GM12878 (cell line): ENCODE measurements at regions of chr3 and their contacts with region 1.

Region 1: GRCh38 chr3:129249276-129250065 is at the start of gene COPG1:
- DNase-seq: peak; percentile 72
- ATAC-seq: peak; percentile 92
- H3K4me3 ChIP-seq: peak within 1 kb of the TSS; percentile 84
- H3K27ac ChIP-seq: peak within 1 kb of the TSS; percentile 94
- H3K4me1 ChIP-seq: peaks cover 8% of the 10 kb centered on the region
- H3K27me3 ChIP-seq: no peaks in the 10 kb centered on the region
- CTCF ChIP-seq: no peak
- EP300 ChIP-seq: no peak
- POLR2A ChIP-seq: peak; percentile 98
- RAD21 ChIP-seq: no peak
- polyA plus RNA-seq, gene COPG1: 54.8 to 102 TPM

Region 2: GRCh38 chr3:128051837-128052594 is 1197.5 kb before region 1 on chr3 and contains the start of gene SEC61A1:
- CTCF ChIA-PET with region 1: no interaction called
- POLR2A ChIA-PET with region 1: no interaction called
- RAD21 ChIA-PET with region 1: no interaction called
- SMC1A ChIA-PET with region 1: no interaction called
- in situ Hi-C with region 1: no loop called
- intact Hi-C with region 1: no loop called
- DNase-seq: peak; percentile 72
- ATAC-seq: peak; percentile 95
- H3K4me3 ChIP-seq: peak within 1 kb of the TSS; percentile 100
- H3K27ac ChIP-seq: peak within 1 kb of the TSS; percentile 79
- H3K4me1 ChIP-seq: peaks cover 15% of the 10 kb centered on the region; the same call in 1 of the 2 replicates
- H3K27me3 ChIP-seq: no peaks in the 10 kb centered on the region
- CTCF ChIP-seq: no peak
- EP300 ChIP-seq: 0 out of 4 replicates have a peak, but pooled peaks of 1 of the 2 experiments have one; percentile 9
- POLR2A ChIP-seq: peak; percentile 97
- RAD21 ChIP-seq: no peak
- polyA plus RNA-seq, gene SEC61A1: 5.2 to 5.9 TPM

Region 3: GRCh38 chr3:129026728-129027543 is 222.5 kb before region 1 on chr3:
- CTCF ChIA-PET with region 1: interaction called, 17 read pairs
- POLR2A ChIA-PET with region 1: interaction called, 3 read pairs
- RAD21 ChIA-PET with region 1: no interaction called
- SMC1A ChIA-PET with region 1: interaction called, 4 read pairs
- in situ Hi-C with region 1: no loop called
- intact Hi-C with region 1: no loop called
- DNase-seq: peak; percentile 53
- ATAC-seq: peak; percentile 100
- H3K4me3 ChIP-seq: peak overlapping the region; percentile 74
- H3K27ac ChIP-seq: no peak overlapping the region
- H3K4me1 ChIP-seq: peaks cover 5% of the 10 kb centered on the region
- H3K27me3 ChIP-seq: peaks cover 0 to 4% of the 10 kb centered on the region in 2 experiments; a peak in 1 of 4 replicates
- CTCF ChIP-seq: peak; percentile 39 to 73 (median 64); a peak in 5 of 6 replicates
- EP300 ChIP-seq: no peak
- POLR2A ChIP-seq: peak; percentile 77
- RAD21 ChIP-seq: no peak

Region 4: DNA sequence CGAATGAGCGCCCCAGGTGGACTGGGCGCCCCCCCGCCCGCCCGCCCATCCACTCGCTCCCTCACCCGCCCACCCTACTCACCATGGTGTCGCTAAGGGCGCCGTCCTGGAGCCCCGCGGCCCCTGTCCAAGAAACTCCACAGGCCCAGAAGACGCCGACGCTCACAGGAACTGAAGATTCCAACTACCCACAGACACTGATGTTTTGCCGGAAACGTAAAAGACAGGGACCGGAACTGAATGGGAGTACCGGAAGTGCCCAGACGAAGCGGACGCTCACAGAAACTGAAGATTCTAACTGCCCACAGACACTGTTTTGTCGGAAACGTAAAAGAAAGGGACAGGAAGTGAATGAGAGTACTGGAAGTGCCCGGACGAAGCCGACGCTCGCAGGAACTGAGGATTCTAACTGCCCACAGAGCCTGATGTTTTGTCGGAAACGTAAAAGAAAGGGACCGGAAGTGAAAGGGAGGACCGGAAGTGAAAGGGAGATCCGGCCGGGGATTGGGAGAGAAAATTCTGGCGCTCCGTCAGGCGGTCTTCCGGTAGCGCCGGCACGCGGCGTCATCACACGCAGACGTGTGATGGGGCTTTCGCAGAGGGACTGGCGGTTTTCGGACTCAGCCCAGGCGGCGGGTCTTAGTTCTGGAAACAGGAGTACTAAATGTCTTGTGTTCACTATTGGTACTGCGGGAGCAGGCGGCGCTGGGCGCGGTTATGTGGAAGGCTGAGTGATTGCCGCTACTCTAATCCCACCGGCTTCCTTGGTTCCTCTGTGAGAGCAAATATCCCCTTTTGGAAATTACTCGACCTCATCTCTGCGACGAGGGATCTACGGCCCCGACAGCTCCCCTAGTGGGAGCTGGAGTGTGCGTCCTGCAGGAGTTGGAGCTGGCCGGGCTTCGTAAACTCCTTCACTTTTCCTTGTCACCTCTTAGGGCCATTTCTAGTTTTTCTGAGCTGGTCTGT is 88.3 kb before region 1 on chr3 and contains the start of gene ISY1:
- CTCF ChIA-PET with region 1: interaction called, 4 read pairs
- POLR2A ChIA-PET with region 1: interaction called, 3 read pairs
- RAD21 ChIA-PET with region 1: interaction called, 13 read pairs
- SMC1A ChIA-PET with region 1: interaction called, 33 read pairs
- in situ Hi-C with region 1: no loop called
- intact Hi-C with region 1: loop called (anchors 1 kb)
- DNase-seq: peak; percentile 87
- ATAC-seq: peak; percentile 87
- H3K4me3 ChIP-seq: peak within 1 kb of the TSS; percentile 99
- H3K27ac ChIP-seq: peak within 1 kb of the TSS; percentile 100
- H3K4me1 ChIP-seq: peaks cover 4% of the 10 kb centered on the region
- H3K27me3 ChIP-seq: no peaks in the 10 kb centered on the region
- CTCF ChIP-seq: peak; percentile 79 to 86 (median 80)
- EP300 ChIP-seq: peak in 1 of 2 experiments; percentile 61; a peak in 2 of 4 replicates
- POLR2A ChIP-seq: peak; percentile 94
- RAD21 ChIP-seq: peak; percentile 54
- polyA plus RNA-seq, gene ISY1: 54.1 to 58.2 TPM

Region 5: DNA sequence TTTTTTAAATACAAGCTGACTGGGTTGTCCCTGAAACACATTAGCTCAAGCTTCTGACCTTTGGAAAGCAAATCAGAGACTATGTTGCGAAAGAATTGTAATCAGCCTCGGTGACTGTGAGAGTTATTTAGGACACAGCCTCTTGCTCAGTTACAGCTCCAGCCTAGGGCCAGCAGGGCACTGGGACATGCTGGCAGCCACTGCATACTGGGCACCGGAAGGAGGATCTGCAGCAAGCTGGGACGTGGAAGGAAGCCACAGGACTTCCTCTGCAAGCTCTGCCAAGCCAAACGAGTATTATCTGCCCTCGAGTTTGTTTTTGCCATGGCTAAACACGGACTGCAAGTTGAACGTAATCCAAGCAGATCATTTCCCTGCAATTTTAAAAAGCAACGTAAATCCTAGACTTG is 24.5 kb before region 1 on chr3:
- CTCF ChIA-PET with region 1: interaction called, 29 read pairs
- POLR2A ChIA-PET with region 1: no interaction called
- RAD21 ChIA-PET with region 1: interaction called, 6 read pairs
- SMC1A ChIA-PET with region 1: interaction called, 6 read pairs
- in situ Hi-C with region 1: no loop called
- intact Hi-C with region 1: no loop called
- DNase-seq: no peak
- ATAC-seq: peak; percentile 68
- H3K4me3 ChIP-seq: no peak overlapping the region
- H3K27ac ChIP-seq: no peak overlapping the region
- H3K4me1 ChIP-seq: no peaks in the 10 kb centered on the region; the same call in 1 of the 2 replicates
- H3K27me3 ChIP-seq: no peaks in the 10 kb centered on the region
- CTCF ChIP-seq: no peak
- EP300 ChIP-seq: no peak
- POLR2A ChIP-seq: no peak
- RAD21 ChIP-seq: no peak

Region 6: GRCh38 chr3:129305592-129306091 is 56.2 kb after region 1 on chr3:
- CTCF ChIA-PET with region 1: interaction called, 3 read pairs
- POLR2A ChIA-PET with region 1: interaction called, 13 read pairs
- RAD21 ChIA-PET with region 1: no interaction called
- SMC1A ChIA-PET with region 1: interaction called, 5 read pairs
- in situ Hi-C with region 1: no loop called
- intact Hi-C with region 1: no loop called
- DNase-seq: no peak
- ATAC-seq: peak; percentile 64
- H3K4me3 ChIP-seq: no peak overlapping the region; the same call in 1 of the 2 replicates
- H3K27ac ChIP-seq: peak overlapping the region; percentile 33; the same call in 1 of the 2 replicates
- H3K4me1 ChIP-seq: peaks cover 17% of the 10 kb centered on the region
- H3K27me3 ChIP-seq: no peaks in the 10 kb centered on the region
- CTCF ChIP-seq: no peak
- EP300 ChIP-seq: no peak; a peak in 2 of 4 replicates
- POLR2A ChIP-seq: peak; percentile 56; the same call in 1 of the 2 replicates
- RAD21 ChIP-seq: no peak